ENCODE measurements at regions of chr16 and their contacts with region 1.

Region 1: DNA sequence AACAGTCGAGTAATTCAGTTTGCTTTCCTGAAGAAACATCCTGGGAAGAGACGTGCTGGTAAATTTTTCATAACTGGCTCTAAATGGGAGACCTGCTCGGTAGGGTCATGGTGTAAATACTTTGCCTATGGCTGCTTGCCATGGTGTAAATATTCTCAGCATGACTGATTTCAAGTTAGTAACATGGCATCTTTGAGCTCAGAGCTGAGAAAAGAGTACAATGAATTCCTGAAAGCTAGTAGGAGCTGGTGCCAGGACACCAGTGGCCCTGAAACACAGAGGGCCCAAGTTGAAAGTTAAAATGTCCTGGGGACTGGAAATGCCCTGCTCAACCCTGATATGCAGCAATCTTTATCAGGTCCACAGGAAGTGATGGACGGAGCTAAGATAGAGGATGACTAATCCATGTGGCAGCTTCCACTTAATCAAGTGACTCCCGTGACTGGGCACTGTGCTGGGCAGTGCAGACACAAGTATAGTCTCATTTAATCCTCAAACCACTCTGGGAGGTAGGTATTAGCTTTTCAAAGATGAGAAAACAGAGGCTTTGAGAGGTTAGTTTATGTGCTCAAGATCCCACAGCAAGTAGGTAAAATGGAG is 130.1 kb upstream of the ADAMTS18 start:
- DNase-seq: no peak
- H3K4me3 ChIP-seq: no peak overlapping the region
- H3K27ac ChIP-seq: no peak overlapping the region
- H3K4me1 ChIP-seq: no peaks in the 10 kb centered on the region
- H3K27me3 ChIP-seq: no peaks in the 10 kb centered on the region
- CTCF ChIP-seq: no peak
- POLR2A ChIP-seq: no peak

Region 2: DNA sequence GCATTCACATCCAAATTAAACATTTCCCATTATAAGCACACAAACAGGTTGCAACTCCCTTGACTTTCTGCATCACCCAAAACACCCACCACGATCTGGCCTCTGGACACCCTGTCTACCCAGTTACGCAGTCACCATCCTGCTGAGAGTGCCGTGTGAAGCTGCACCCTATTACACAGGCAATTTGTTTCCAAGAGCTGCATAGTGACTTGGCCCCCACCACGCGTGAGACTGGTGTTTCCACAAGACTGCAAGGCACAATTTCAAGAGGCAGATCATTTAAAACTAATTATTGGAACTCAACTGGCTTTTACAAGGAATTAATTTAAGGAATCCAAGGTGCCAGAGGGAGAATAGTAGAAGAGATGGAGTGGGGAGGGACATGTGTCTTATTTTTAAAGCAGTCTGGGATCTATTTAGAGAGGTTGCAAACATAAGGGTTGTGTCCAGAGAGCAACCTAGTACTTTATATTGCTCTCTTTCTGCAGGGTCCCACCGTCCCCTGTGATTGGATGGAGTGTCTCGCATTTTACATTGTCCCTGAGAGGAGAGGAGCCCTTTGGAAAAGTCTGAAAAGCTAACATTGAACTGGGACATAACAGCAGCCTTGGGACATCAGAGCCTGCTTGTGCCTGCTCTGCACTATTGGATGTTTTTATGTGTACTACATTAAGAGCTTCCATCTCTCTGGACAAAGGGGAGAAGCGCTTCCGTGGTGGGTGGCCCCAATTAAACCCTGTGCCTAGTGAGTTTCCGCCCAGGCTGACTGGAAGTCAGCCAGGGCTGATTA is 121.3 kb before region 1 on chr16:
- intact Hi-C with region 1: loop called (anchors 10 kb)
- DNase-seq: no peak
- H3K4me3 ChIP-seq: no peak overlapping the region
- H3K27ac ChIP-seq: no peak overlapping the region
- H3K4me1 ChIP-seq: peaks cover 10% of the 10 kb centered on the region
- H3K27me3 ChIP-seq: no peaks in the 10 kb centered on the region
- CTCF ChIP-seq: no peak
- POLR2A ChIP-seq: no peak

Region 3: GRCh38 chr16:77488652-77489051 is 76.2 kb before region 1 on chr16:
- intact Hi-C with region 1: loop called (anchors 1 kb)
- DNase-seq: no peak
- H3K4me3 ChIP-seq: no peak overlapping the region
- H3K27ac ChIP-seq: no peak overlapping the region
- H3K4me1 ChIP-seq: no peaks in the 10 kb centered on the region
- H3K27me3 ChIP-seq: no peaks in the 10 kb centered on the region
- CTCF ChIP-seq: no peak
- POLR2A ChIP-seq: no peak

Region 4: GRCh38 chr16:77514500-77515220 is 50.2 kb before region 1 on chr16:
- intact Hi-C with region 1: no loop called
- DNase-seq: no peak
- H3K4me3 ChIP-seq: no peak overlapping the region
- H3K27ac ChIP-seq: no peak overlapping the region
- H3K4me1 ChIP-seq: no peaks in the 10 kb centered on the region
- H3K27me3 ChIP-seq: no peaks in the 10 kb centered on the region
- CTCF ChIP-seq: no peak
- POLR2A ChIP-seq: no peak

Region 5: DNA sequence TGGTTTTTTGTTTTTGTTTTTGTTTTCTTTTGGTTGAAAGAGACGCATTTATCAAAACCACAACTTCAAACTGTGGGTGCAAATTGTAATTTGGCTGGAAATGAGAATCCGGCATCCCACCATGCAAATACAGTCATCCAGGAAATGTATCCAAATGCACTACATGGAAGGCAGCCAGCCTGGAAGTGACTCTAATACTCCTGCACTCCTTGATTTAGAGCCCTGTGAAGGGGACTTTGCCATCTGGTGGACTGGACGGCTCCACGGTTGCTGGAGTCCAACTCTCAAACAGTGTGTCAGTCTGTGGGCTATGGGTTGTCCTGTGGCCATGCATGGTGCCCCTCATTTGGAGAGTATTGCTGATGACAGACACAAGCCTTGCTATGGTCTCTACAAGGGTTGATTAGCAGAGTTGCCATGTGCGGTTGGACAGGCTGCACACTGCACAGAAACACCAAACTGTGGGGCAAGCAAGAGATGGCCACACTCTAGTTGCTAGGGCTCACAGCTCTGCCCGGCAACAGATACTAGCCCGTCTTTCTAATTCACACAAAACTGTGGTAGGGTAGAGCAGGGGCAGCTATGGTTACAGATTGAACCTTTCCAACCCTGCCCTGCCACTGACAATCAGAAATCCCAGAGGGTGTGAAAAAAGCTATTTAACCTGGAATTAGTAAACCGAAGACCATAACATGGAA is 285.9 kb after region 1 on chr16:
- intact Hi-C with region 1: no loop called
- DNase-seq: no peak
- H3K4me3 ChIP-seq: no peak overlapping the region
- H3K27ac ChIP-seq: no peak overlapping the region
- H3K4me1 ChIP-seq: no peaks in the 10 kb centered on the region
- H3K27me3 ChIP-seq: no peaks in the 10 kb centered on the region
- CTCF ChIP-seq: no peak
- POLR2A ChIP-seq: no peak

Region 6: GRCh38 chr16:78815713-78816112 is 1250.8 kb after region 1 on chr16:
- intact Hi-C with region 1: no loop called
- DNase-seq: no peak
- H3K4me3 ChIP-seq: no peak overlapping the region
- H3K27ac ChIP-seq: peak overlapping the region; percentile 60
- H3K4me1 ChIP-seq: peaks cover 33% of the 10 kb centered on the region
- H3K27me3 ChIP-seq: no peaks in the 10 kb centered on the region
- CTCF ChIP-seq: no peak
- POLR2A ChIP-seq: no peak